ENCODE measurements at regions of chr19 and their contacts with region 1.

Region 1: DNA sequence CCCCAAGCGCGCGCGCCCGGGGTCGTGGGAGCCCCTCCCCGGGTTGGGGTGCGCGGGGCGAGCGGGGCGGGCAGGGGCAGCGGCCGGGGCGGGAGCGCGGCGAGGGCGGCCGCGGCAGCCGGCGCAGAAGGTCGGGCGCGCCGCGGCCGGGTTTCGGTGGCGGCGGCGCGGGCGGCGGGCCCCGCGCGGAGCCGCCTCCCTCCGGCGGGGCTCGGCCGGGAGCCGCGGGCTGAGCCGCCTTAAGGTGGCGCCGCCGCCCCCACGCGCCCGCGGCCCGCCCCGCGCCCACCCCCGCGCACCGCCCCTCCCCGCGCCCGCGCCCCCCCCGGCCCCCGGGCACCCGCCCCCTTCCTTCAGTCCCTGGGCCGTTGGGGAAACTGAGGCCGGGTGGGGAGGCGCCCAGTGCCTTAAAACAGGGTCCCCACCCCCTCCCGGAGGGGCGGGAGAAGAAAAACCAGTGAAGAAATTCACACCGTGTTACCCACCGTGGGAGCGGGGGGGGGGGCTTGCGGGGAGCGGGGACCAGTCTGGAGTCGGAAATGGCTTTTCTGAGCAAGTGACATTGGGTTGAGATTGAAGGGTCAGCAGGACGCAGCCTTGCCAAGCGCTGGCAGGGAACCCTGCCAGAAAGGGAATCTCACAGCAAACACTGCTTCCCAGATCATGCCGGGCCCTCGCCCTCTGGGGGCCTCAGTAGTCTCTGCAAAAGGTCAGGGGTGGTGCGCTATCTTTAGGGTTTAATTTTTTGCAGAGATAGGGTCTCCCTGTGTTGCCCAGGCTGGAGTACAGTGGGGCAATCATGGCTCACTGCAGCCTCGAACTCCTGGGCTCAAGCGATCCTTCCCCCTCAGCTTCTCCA is at the start of gene TLE2:
- DNase-seq: no peak
- H3K4me3 ChIP-seq: peak within 1 kb of the TSS; percentile 52
- H3K27ac ChIP-seq: no peak within 1 kb of the TSS
- H3K4me1 ChIP-seq: peaks cover 4% of the 10 kb centered on the region
- H3K27me3 ChIP-seq: no peaks in the 10 kb centered on the region
- CTCF ChIP-seq: no peak
- total RNA-seq, gene TLE2: 42.8 to 52.4 TPM

Region 2: GRCh38 chr19:2750808-2751443 is 278.4 kb before region 1 on chr19:
- intact Hi-C with region 1: no loop called
- DNase-seq: no peak
- H3K4me3 ChIP-seq: no peak overlapping the region
- H3K27ac ChIP-seq: no peak overlapping the region
- H3K4me1 ChIP-seq: no peaks in the 10 kb centered on the region
- H3K27me3 ChIP-seq: no peaks in the 10 kb centered on the region
- CTCF ChIP-seq: no peak

Region 3: GRCh38 chr19:2912306-2912705 is 117.0 kb before region 1 on chr19:
- intact Hi-C with region 1: no loop called
- DNase-seq: no peak
- H3K4me3 ChIP-seq: no peak overlapping the region
- H3K27ac ChIP-seq: no peak overlapping the region
- H3K4me1 ChIP-seq: no peaks in the 10 kb centered on the region
- H3K27me3 ChIP-seq: no peaks in the 10 kb centered on the region
- CTCF ChIP-seq: no peak

Region 4: DNA sequence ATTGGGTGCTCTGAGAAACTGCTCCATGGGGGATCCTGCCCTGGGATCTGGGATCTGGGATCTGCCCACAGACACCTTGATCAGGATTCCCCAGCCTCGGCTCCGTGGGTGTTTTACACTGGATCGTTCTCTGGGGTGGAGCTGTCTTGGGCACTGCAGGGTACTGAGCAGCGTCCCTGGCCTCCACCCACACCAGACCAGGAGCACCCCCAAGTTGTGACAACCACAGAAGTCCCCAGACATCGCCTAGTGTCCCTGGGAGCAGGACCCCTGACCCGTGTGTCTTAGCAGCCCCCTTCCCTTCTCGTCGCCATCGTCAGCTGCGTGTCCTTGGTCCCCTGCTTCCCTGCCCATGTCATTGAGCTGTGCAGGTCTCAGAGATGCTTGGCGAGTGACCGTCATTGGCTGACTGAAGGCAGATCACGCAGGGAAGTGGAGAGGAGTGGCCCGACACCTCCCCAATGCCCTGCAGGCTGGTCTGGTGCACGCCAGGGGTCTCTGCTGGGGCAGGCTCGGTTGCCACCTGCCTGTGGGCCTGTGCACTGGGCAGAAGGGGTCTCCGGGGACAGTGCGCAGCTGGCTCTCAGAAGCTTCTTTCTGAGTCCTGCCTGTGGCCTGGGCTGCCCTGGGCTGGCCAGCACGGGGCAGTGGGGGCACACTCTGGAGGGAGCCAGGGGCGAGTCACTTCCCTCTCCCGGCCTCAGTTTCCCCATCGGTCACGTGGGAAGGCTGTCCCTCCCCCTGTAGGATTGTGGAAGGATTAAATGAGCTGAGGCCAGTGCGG is 71.0 kb after region 1 on chr19:
- intact Hi-C with region 1: loop called (anchors 5 kb)
- DNase-seq: no peak
- H3K4me3 ChIP-seq: no peak overlapping the region
- H3K27ac ChIP-seq: no peak overlapping the region
- H3K4me1 ChIP-seq: peaks cover 48% of the 10 kb centered on the region
- H3K27me3 ChIP-seq: no peaks in the 10 kb centered on the region
- CTCF ChIP-seq: no peak